CD8-positive, alpha-beta T cell (primary cell): ENCODE measurements at regions of chr18 and their contacts with region 1.

Region 1: DNA sequence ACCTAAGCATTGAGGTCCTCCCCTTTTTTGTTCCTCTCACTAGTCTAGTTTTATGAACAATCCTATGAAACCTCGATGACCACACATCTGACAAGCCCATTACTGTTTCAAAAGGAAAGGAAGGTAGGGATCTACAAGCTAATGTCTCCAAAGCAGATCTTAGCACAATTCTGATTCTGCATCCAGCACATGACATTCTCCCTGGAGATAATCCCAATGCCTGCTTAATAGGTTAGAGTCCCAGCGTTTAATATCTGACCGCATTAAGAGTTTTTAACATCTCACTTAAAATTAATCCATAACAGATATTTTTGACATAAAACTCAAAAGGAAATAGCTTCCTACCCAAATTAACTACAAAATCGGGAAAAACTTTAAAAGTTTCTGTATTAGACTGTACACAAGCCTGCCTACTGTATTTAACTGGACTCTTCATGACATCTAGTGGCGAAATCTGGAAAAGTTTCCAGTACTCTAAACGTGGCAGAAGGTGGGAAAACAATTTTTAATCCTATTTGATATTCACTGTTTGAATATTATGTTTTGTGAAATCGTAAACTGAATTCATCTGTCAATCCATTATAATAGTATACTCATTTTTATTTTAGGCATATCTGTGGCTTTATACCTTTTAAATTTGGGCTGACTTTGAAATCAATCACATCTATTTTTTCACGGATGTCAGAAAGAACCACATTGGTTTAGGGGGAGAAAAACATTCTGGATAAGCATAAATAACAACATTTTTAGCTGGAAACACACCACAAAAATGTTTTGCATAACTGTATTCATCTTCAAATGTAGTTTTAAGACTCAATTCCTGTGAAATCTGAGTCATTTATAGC is 62.4 kb downstream of the TXNL1 start:
- DNase-seq: peak in 2 of 9 experiments; percentile 16 to 48
- ATAC-seq: no peak
- H3K4me3 ChIP-seq: no peak overlapping the region
- H3K4me3 Mint-ChIP-seq: no peak overlapping the region
- H3K27ac ChIP-seq: no peak overlapping the region
- H3K27ac Mint-ChIP-seq: no peak overlapping the region
- H3K4me1 ChIP-seq: no peaks in the 10 kb centered on the region
- H3K4me1 Mint-ChIP-seq: no peaks in the 10 kb centered on the region
- H3K27me3 ChIP-seq: no peaks in the 10 kb centered on the region
- H3K27me3 Mint-ChIP-seq: peaks cover 18% of the 10 kb centered on the region
- CTCF ChIP-seq: peak; percentile 39

Region 2: GRCh38 chr18:55234366-55235093 is 1341.5 kb before region 1 on chr18:
- CTCF ChIA-PET with region 1: interaction called, 4 read pairs
- POLR2A ChIA-PET with region 1: no interaction called
- intact Hi-C with region 1: loop called (anchors 2 to 5 kb)
- DNase-seq: peak; percentile 2 to 59 (median 26)
- ATAC-seq: no peak
- H3K4me3 ChIP-seq: no peak overlapping the region
- H3K4me3 Mint-ChIP-seq: no peak overlapping the region
- H3K27ac ChIP-seq: no peak overlapping the region
- H3K27ac Mint-ChIP-seq: no peak overlapping the region
- H3K4me1 ChIP-seq: no peaks in the 10 kb centered on the region
- H3K4me1 Mint-ChIP-seq: peaks cover 2% of the 10 kb centered on the region
- H3K27me3 ChIP-seq: no peaks in the 10 kb centered on the region
- H3K27me3 Mint-ChIP-seq: no peaks in the 10 kb centered on the region
- CTCF ChIP-seq: peak; percentile 35

Region 3: DNA sequence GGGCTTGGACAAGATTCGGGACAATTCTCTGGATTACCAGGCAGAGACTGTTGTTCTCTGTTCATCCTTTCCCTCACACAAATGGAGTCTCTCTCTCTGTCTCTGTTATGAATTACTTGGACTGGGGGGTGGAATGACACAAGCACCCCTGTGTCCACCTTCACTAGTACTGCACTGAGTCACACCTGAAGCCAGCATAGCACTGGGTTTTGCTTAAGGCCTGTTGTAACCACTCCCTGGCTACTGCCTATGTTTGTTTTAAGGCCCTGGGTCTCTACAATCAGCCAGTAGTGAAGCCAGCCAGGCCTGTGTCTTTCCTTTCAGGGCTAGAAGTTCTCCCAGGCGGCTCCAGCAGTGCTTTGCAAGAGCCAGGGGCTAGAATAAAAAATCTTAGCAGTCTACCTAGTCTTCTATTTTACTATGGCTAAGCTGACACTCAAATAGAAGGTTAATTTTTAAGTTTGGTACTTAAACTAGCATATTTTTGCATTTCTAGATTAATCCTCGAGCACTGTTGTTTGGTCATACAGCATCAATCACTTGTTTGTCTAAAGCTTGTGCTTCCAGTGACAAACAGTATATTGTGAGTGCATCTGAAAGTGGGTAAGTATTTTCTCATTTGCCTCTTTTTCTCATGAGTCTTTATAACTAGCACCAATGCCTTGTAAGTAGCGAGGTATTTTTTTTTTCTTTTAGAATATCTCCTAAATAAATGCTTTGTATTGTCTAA is 103.0 kb after region 1 on chr18:
- CTCF ChIA-PET with region 1: no interaction called
- POLR2A ChIA-PET with region 1: no interaction called
- intact Hi-C with region 1: no loop called
- DNase-seq: no peak
- ATAC-seq: no peak
- H3K4me3 ChIP-seq: no peak overlapping the region
- H3K4me3 Mint-ChIP-seq: no peak overlapping the region
- H3K27ac ChIP-seq: no peak overlapping the region
- H3K27ac Mint-ChIP-seq: no peak overlapping the region
- H3K4me1 ChIP-seq: no peaks in the 10 kb centered on the region
- H3K4me1 Mint-ChIP-seq: peaks cover 5% of the 10 kb centered on the region
- H3K27me3 ChIP-seq: no peaks in the 10 kb centered on the region
- H3K27me3 Mint-ChIP-seq: no peaks in the 10 kb centered on the region
- CTCF ChIP-seq: no peak